ENCODE measurements at regions of chr1 and their contacts with region 1.

Region 1: GRCh38 chr1:110674337-110675059 is at the start of gene KCNA3:
- DNase-seq: peak; percentile 74
- ATAC-seq: peak; percentile 28
- H3K4me3 Mint-ChIP-seq: peak within 1 kb of the TSS; percentile 100
- H3K27ac Mint-ChIP-seq: peak within 1 kb of the TSS; percentile 98
- H3K4me1 Mint-ChIP-seq: peaks cover 30% of the 10 kb centered on the region
- H3K27me3 Mint-ChIP-seq: no peaks in the 10 kb centered on the region
- CTCF ChIP-seq: peak; percentile 47
- total RNA-seq, gene KCNA3: 15.5 to 16.2 TPM

Region 2: DNA sequence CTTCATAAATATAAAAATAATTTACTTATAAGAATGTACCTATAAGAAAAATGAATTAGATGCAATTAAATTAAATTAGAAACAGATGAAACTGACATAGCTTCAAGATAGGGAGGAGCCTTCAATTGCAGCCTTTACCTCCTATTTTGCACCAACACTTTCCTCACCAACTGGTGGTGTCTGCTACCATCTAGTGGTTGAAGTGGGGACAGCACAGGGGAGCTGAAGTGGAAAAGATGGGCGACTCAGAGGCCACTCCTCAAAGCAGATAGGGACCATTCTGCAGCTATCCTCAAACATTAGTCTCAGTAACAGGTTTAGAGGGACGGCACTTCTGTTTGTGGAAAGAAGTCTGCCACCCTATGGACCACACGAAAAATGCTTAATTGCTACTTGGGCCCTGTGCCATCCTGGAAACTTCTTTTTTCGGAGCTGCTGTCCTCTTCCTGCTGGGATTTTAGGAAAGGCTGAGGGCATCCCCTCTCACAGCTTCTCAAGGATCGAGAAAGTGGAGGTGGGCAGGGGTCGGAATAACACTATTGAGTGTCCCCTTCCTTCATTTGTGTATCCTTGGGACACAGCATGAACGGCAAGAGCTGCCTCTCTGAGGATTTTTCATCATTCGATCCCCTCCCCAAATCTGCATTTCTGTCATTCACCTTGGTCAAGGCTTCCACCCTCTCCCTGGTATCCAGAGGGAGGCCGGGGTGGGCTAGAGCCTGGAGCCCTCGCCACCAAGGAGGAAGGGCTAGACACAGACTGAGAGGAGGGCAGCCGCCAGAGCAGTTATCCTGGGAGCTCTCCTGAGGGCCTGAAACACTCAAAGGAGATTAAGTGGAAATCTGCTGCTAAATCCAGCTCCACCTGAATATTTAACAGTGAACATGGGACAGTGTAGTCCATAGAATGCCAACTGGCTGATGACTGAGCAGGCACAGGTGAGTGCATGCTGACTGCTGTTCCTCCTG is 214.0 kb before region 1 on chr1:
- CTCF ChIA-PET with region 1: no interaction called
- POLR2A ChIA-PET with region 1: no interaction called
- intact Hi-C with region 1: no loop called
- DNase-seq: peak; percentile 90
- ATAC-seq: peak; percentile 100
- H3K4me3 Mint-ChIP-seq: no peak overlapping the region
- H3K27ac Mint-ChIP-seq: no peak overlapping the region
- H3K4me1 Mint-ChIP-seq: no peaks in the 10 kb centered on the region
- H3K27me3 Mint-ChIP-seq: no peaks in the 10 kb centered on the region
- CTCF ChIP-seq: peak; percentile 89

Region 3: GRCh38 chr1:110630839-110631663 is 43.4 kb before region 1 on chr1:
- CTCF ChIA-PET with region 1: interaction called, 10 read pairs
- POLR2A ChIA-PET with region 1: interaction called, 42 read pairs
- intact Hi-C with region 1: loop called (anchors 1 kb)
- DNase-seq: peak; percentile 89
- ATAC-seq: peak; percentile 69
- H3K4me3 Mint-ChIP-seq: no peak overlapping the region
- H3K27ac Mint-ChIP-seq: no peak overlapping the region
- H3K4me1 Mint-ChIP-seq: peaks cover 52% of the 10 kb centered on the region
- H3K27me3 Mint-ChIP-seq: no peaks in the 10 kb centered on the region
- CTCF ChIP-seq: peak; percentile 85

Region 4: DNA sequence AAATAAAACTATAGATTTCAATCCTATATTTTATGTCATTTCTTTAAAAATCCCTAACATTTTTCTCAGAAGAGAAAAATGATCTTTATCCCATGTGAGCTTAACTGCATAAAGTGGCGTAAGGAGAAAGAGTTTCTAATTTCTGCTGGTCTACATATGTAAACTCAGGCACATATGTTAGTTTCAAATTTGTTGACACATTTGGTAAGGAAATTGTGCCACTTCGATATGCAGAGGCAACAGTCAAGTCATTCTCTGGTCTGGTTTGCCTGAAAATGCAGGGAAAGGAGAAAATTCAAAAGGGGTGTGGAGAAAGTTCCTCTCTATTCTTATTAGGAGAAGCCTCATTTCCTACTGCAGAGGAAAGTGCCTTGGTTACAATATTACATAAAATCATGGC is 11.3 kb before region 1 on chr1:
- CTCF ChIA-PET with region 1: interaction called, 6 read pairs
- POLR2A ChIA-PET with region 1: interaction called, 18 read pairs
- intact Hi-C with region 1: no loop called
- DNase-seq: no peak
- ATAC-seq: no peak
- H3K4me3 Mint-ChIP-seq: no peak overlapping the region
- H3K27ac Mint-ChIP-seq: no peak overlapping the region
- H3K4me1 Mint-ChIP-seq: peaks cover 27% of the 10 kb centered on the region
- H3K27me3 Mint-ChIP-seq: no peaks in the 10 kb centered on the region
- CTCF ChIP-seq: no peak

Region 5: GRCh38 chr1:110936567-110936966 is 262.1 kb after region 1 on chr1:
- CTCF ChIA-PET with region 1: no interaction called
- POLR2A ChIA-PET with region 1: no interaction called
- intact Hi-C with region 1: no loop called
- DNase-seq: no peak
- ATAC-seq: no peak
- H3K4me3 Mint-ChIP-seq: no peak overlapping the region
- H3K27ac Mint-ChIP-seq: no peak overlapping the region
- H3K4me1 Mint-ChIP-seq: no peaks in the 10 kb centered on the region
- H3K27me3 Mint-ChIP-seq: no peaks in the 10 kb centered on the region
- CTCF ChIP-seq: no peak